IMR-90 (cell line): ENCODE measurements at regions of chr7 and their contacts with region 1.

Region 1: DNA sequence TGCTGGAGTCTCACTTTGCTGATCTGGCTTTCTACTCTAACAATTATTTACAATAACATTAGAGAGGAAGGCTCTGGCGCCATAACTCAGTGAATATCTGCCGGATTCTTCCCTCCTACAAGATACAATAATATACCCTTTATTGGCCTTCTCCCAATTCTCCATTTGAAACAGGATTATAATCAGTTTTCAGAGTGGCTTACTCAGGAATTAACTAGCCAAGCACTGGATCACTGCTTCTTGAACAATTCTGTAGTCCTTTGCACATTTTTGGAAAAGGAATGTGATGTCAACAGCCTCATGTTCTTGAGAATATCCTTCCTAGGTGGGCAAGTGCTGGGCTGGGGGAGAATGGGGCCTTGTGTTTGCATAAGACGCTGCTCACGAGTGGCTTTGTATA is 125.9 kb downstream of the HIPK2 start:
- DNase-seq: peak; percentile 27
- ATAC-seq: peak; percentile 5; the same call in 1 of the 2 replicates
- H3K4me3 ChIP-seq: no peak overlapping the region
- H3K27ac ChIP-seq: peak overlapping the region; percentile 31; the same call in 1 of the 2 replicates
- H3K4me1 ChIP-seq: peaks cover 23% of the 10 kb centered on the region
- H3K27me3 ChIP-seq: no peaks in the 10 kb centered on the region
- CTCF ChIP-seq: no peak
- POLR2A ChIP-seq: no peak
- RAD21 ChIP-seq: no peak

Region 2: GRCh38 chr7:139543801-139544603 is 107.9 kb before region 1 on chr7:
- CTCF ChIA-PET with region 1: no interaction called
- POLR2A ChIA-PET with region 1: no interaction called
- dilution Hi-C with region 1: no loop called
- in situ Hi-C with region 1: no loop called
- intact Hi-C with region 1: no loop called
- DNase-seq: no peak
- ATAC-seq: no peak
- H3K4me3 ChIP-seq: no peak overlapping the region
- H3K27ac ChIP-seq: no peak overlapping the region
- H3K4me1 ChIP-seq: no peaks in the 10 kb centered on the region
- H3K27me3 ChIP-seq: peaks cover 50% of the 10 kb centered on the region
- CTCF ChIP-seq: no peak
- POLR2A ChIP-seq: no peak
- RAD21 ChIP-seq: no peak

Region 3: DNA sequence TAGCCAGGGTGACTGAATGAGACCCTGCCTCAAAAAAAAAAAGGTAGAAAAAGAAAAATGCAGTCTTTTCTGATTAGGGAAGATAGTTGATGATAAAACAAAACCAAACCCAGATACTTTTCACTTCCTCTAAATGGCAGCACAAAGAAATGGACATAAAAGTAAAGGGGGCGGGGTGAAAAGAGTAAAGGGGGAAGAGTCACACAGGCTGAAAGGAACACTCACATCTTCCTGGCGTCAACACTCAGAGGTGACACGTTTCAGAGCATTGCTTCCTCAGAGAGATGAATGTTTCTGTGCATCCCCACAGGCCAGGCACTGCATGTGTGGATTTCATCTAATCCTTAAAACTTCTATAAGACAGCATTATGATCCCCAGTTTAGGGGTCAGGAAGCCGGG is 44.6 kb after region 1 on chr7:
- CTCF ChIA-PET with region 1: no interaction called
- POLR2A ChIA-PET with region 1: no interaction called
- dilution Hi-C with region 1: no loop called
- in situ Hi-C with region 1: no loop called
- intact Hi-C with region 1: no loop called
- DNase-seq: no peak
- ATAC-seq: no peak
- H3K4me3 ChIP-seq: no peak overlapping the region
- H3K27ac ChIP-seq: no peak overlapping the region
- H3K4me1 ChIP-seq: peaks cover 28% of the 10 kb centered on the region
- H3K27me3 ChIP-seq: no peaks in the 10 kb centered on the region
- CTCF ChIP-seq: no peak
- POLR2A ChIP-seq: no peak
- RAD21 ChIP-seq: no peak

Region 4: GRCh38 chr7:140035400-140036223 is 383.7 kb after region 1 on chr7:
- CTCF ChIA-PET with region 1: no interaction called
- POLR2A ChIA-PET with region 1: interaction called, 34 read pairs
- dilution Hi-C with region 1: no loop called
- in situ Hi-C with region 1: no loop called
- intact Hi-C with region 1: no loop called
- DNase-seq: peak; percentile 81
- ATAC-seq: peak; percentile 90
- H3K4me3 ChIP-seq: no peak overlapping the region
- H3K27ac ChIP-seq: peak overlapping the region; percentile 31; the same call in 1 of the 2 replicates
- H3K4me1 ChIP-seq: peaks cover 13% of the 10 kb centered on the region
- H3K27me3 ChIP-seq: no peaks in the 10 kb centered on the region
- CTCF ChIP-seq: no peak
- POLR2A ChIP-seq: no peak
- RAD21 ChIP-seq: no peak

Region 5: DNA sequence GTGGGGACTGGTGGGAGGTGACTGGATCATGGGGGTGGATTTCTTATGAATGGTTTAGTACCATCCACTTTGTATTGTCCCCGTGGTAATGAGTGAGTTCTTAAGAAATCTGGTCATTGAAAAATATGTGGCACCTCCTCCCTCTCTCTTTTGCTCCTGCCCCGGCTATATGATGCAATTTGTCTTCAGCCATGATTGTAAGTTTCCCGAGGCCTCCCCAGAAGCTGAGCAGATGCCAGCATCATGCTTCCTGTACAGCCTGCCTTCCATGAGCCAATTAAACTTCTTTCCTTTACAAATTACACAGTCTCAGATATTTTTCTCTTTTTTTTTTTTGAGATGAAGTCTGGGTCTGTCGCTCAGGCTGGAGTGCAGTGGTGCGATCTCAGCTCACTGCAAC is 527.4 kb after region 1 on chr7:
- CTCF ChIA-PET with region 1: no interaction called
- POLR2A ChIA-PET with region 1: no interaction called
- dilution Hi-C with region 1: no loop called
- in situ Hi-C with region 1: no loop called
- intact Hi-C with region 1: no loop called
- DNase-seq: no peak
- ATAC-seq: no peak
- H3K4me3 ChIP-seq: no peak overlapping the region
- H3K27ac ChIP-seq: no peak overlapping the region
- H3K4me1 ChIP-seq: no peaks in the 10 kb centered on the region
- H3K27me3 ChIP-seq: peaks cover 11% of the 10 kb centered on the region
- CTCF ChIP-seq: no peak
- POLR2A ChIP-seq: no peak
- RAD21 ChIP-seq: no peak